ENCODE measurements at regions of chr7 and their contacts with region 1.

Region 1: DNA sequence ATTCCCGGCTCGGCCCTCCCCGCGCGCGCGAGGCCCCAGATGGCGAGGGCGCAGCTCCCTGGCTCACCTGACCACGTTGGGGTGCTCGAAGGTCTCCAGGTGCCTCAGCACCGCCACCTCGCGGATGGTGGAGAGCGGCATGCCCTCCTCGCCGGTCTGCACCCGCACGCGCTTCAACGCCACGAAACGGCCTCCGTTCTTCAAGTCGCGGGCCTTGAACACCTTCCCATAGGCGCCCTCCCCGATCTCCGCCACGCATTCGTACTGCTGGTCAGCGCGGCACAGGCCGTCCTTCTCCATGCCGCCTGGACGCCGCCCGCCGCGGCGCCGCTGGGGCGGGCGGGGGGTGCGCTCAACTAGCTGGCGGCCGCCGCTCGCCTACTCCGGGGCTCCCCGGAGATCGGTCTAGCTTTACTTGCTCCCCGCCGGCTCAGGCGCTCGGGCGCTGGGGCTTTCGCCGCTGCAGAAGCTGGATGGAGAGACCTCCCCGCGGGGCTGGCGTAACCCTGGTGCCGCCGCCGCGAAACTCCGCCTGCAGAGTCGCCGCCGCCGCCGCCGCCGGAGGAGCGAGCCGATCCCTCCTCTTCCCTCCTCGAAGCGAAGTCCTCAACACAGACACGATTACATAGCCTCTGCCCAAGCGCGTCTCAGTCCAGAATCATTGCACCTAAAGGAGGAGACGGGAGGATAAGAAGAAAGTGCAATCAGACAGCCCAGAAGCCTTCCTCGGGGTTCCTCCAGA is 3.2 kb downstream of the CDK6 start:
- DNase-seq: peak; percentile 68 to 80 (median 71)
- H3K4me3 ChIP-seq: peak overlapping the region; percentile 88 to 94 (median 94)
- H3K4me3 Mint-ChIP-seq: peak overlapping the region; percentile 100
- H3K27ac ChIP-seq: peak overlapping the region; percentile 68 to 73
- H3K27ac Mint-ChIP-seq: peak overlapping the region; percentile 85 to 96 (median 93)
- H3K4me1 ChIP-seq: peaks cover 39 to 50% of the 10 kb centered on the region in 2 donors
- H3K4me1 Mint-ChIP-seq: peaks cover 32% of the 10 kb centered on the region
- H3K27me3 ChIP-seq: peaks cover 4 to 7% of the 10 kb centered on the region in 2 donors
- H3K27me3 Mint-ChIP-seq: peaks cover 6 to 10% (median 8%) of the 10 kb centered on the region in 3 donors
- CTCF ChIP-seq: peak; percentile 82

Region 2: GRCh38 chr7:92621026-92621540 is 212.1 kb before region 1 on chr7:
- intact Hi-C with region 1: loop called in 1 of 2 experiments (anchors 5 kb)
- DNase-seq: peak; percentile 85 to 90 (median 87)
- H3K4me3 ChIP-seq: peak overlapping the region in 1 of 3 experiments; percentile 53
- H3K4me3 Mint-ChIP-seq: peak overlapping the region; percentile 45 to 76
- H3K27ac ChIP-seq: peak overlapping the region in 1 of 2 donors; percentile 75
- H3K27ac Mint-ChIP-seq: peak overlapping the region; percentile 53 to 92 (median 80)
- H3K4me1 ChIP-seq: peaks cover 9 to 21% of the 10 kb centered on the region in 2 donors
- H3K4me1 Mint-ChIP-seq: peaks cover 22% of the 10 kb centered on the region
- H3K27me3 ChIP-seq: no peaks in the 10 kb centered on the region
- H3K27me3 Mint-ChIP-seq: no peaks in the 10 kb centered on the region
- CTCF ChIP-seq: peak; percentile 80

Region 3: GRCh38 chr7:92633211-92633906 is 199.8 kb before region 1 on chr7:
- intact Hi-C with region 1: loop called in 1 of 2 experiments (anchors 5 kb)
- DNase-seq: peak; percentile 84 to 95 (median 92)
- H3K4me3 ChIP-seq: peak overlapping the region in 1 of 3 experiments; percentile 70
- H3K4me3 Mint-ChIP-seq: peak overlapping the region in 1 of 2 donors; percentile 63
- H3K27ac ChIP-seq: peak overlapping the region in 1 of 2 donors; percentile 94
- H3K27ac Mint-ChIP-seq: peak overlapping the region; percentile 81 to 97 (median 89)
- H3K4me1 ChIP-seq: peaks cover 43 to 60% of the 10 kb centered on the region in 2 donors
- H3K4me1 Mint-ChIP-seq: peaks cover 47% of the 10 kb centered on the region
- H3K27me3 ChIP-seq: no peaks in the 10 kb centered on the region
- H3K27me3 Mint-ChIP-seq: no peaks in the 10 kb centered on the region
- CTCF ChIP-seq: no peak

Region 4: DNA sequence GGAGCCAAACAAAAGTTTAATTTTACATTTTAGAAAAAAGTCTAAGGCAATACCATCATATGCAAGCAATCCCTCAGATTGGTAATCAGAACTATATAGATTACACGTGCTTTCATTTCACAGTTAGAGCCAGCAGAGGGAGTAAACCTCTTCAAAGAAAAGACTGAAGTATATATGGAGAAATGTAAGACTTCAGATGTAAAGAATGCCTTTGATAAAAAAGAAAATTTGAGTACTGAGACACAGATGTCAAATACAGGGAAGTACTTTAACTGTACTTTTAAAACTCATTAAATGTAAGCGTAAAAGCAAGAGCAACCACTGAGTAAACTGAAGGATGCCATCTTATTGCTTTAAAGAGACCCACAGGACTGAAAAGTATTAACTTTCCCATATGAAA is 141.6 kb before region 1 on chr7:
- intact Hi-C with region 1: loop called (anchors 5 kb)
- DNase-seq: peak; percentile 45 to 61 (median 54)
- H3K4me3 ChIP-seq: no peak overlapping the region
- H3K4me3 Mint-ChIP-seq: no peak overlapping the region
- H3K27ac ChIP-seq: no peak overlapping the region
- H3K27ac Mint-ChIP-seq: no peak overlapping the region
- H3K4me1 ChIP-seq: peaks cover 0 to 6% of the 10 kb centered on the region in 2 donors
- H3K4me1 Mint-ChIP-seq: peaks cover 15% of the 10 kb centered on the region
- H3K27me3 ChIP-seq: no peaks in the 10 kb centered on the region
- H3K27me3 Mint-ChIP-seq: no peaks in the 10 kb centered on the region
- CTCF ChIP-seq: peak; percentile 78

Region 5: DNA sequence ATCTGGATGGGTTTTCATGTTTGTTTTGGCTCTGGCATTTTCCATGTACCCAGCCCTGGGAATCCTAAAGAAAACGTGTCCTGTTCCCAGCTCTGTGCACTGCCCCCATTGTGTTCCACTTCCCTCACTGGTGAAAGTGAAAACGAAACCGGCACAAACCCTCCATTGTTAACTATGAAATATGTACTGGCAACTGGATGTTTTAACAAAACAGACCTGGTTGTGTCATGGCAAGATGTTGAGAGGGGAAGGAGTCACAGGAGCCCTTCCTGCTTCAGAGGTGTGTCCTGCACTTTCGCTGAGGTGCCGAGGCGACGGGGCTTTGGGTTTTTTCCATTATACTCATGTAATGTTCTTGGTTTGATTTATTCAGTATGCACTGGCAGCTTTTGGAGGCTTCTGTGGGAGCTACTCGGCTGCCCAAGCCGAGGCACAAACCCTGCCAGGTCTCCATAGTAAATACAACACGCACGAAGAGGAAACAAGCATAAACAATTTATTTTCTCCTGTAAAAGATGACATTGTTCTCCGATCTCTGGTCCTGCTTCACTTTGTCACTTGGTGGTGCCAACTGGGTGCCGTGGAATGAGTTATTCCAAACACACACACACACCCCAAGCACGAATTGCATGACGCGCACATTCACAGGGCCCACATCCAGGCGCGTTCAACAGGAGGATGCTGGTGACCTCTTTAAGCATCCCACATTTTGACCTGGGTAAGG is 115.0 kb before region 1 on chr7:
- intact Hi-C with region 1: loop called in 1 of 2 experiments (anchors 5 kb)
- DNase-seq: peak; percentile 53 to 67 (median 66)
- H3K4me3 ChIP-seq: peak overlapping the region; percentile 56 to 95 (median 79)
- H3K4me3 Mint-ChIP-seq: peak overlapping the region; percentile 95 to 100
- H3K27ac ChIP-seq: peak overlapping the region; percentile 79 to 93
- H3K27ac Mint-ChIP-seq: peak overlapping the region; percentile 95 to 99 (median 97)
- H3K4me1 ChIP-seq: peaks cover 16 to 25% of the 10 kb centered on the region in 2 donors
- H3K4me1 Mint-ChIP-seq: peaks cover 27% of the 10 kb centered on the region
- H3K27me3 ChIP-seq: no peaks in the 10 kb centered on the region
- H3K27me3 Mint-ChIP-seq: peaks cover 0 to 2% (median 0%) of the 10 kb centered on the region in 3 donors
- CTCF ChIP-seq: no peak

Region 6: GRCh38 chr7:92740700-92741126 is 92.5 kb before region 1 on chr7:
- intact Hi-C with region 1: no loop called
- DNase-seq: no peak
- H3K4me3 ChIP-seq: no peak overlapping the region
- H3K4me3 Mint-ChIP-seq: no peak overlapping the region
- H3K27ac ChIP-seq: no peak overlapping the region
- H3K27ac Mint-ChIP-seq: no peak overlapping the region
- H3K4me1 ChIP-seq: no peaks in the 10 kb centered on the region
- H3K4me1 Mint-ChIP-seq: no peaks in the 10 kb centered on the region
- H3K27me3 ChIP-seq: no peaks in the 10 kb centered on the region
- H3K27me3 Mint-ChIP-seq: no peaks in the 10 kb centered on the region
- CTCF ChIP-seq: no peak